ENCODE measurements at regions of chr5 and their contacts with region 1.

Region 1: DNA sequence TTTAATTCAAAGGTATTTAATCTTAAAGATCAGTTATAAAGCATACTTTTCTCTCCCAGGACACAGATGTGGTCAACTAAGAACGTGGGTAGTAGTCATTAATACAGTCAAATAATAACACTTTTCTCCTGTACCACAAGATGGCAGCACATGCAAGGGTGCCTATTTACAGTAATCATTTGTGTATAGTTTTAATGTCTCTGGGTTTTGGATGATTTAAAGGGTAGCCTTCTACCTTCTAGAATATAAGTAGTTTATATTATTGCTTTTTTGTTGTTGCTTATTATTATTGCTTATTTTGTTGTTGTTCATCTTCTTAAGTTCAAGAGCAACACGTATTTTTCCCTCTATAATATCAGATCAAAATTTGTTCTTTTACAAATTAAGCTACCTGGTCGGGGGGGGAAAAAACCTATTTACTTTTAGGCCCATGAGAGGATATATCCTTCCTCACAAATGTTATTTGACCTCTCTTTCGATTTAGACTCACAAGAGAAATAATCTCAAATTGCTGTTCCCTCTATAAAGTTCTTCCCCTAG is 59.6 kb upstream of the SLC27A6 start:
- DNase-seq: peak; percentile 34
- ATAC-seq: peak; percentile 83
- H3K4me3 ChIP-seq: no peak overlapping the region
- H3K27ac ChIP-seq: no peak overlapping the region
- H3K4me1 ChIP-seq: no peaks in the 10 kb centered on the region
- H3K27me3 ChIP-seq: no peaks in the 10 kb centered on the region
- CTCF ChIP-seq: peak; percentile 73
- EP300 ChIP-seq: no peak
- POLR2A ChIP-seq: no peak
- RAD21 ChIP-seq: peak; percentile 41; the same call in 1 of the 2 replicates

Region 2: GRCh38 chr5:129125810-129126209 is 220.2 kb after region 1 on chr5:
- CTCF ChIA-PET with region 1: interaction called, 9 read pairs
- POLR2A ChIA-PET with region 1: no interaction called
- in situ Hi-C with region 1: loop called (anchors 5 kb)
- intact Hi-C with region 1: loop called (anchors 1 kb)
- DNase-seq: no peak
- ATAC-seq: peak; percentile 56
- H3K4me3 ChIP-seq: no peak overlapping the region
- H3K27ac ChIP-seq: no peak overlapping the region
- H3K4me1 ChIP-seq: no peaks in the 10 kb centered on the region
- H3K27me3 ChIP-seq: no peaks in the 10 kb centered on the region
- CTCF ChIP-seq: no peak
- EP300 ChIP-seq: no peak
- POLR2A ChIP-seq: no peak
- RAD21 ChIP-seq: no peak

Region 3: DNA sequence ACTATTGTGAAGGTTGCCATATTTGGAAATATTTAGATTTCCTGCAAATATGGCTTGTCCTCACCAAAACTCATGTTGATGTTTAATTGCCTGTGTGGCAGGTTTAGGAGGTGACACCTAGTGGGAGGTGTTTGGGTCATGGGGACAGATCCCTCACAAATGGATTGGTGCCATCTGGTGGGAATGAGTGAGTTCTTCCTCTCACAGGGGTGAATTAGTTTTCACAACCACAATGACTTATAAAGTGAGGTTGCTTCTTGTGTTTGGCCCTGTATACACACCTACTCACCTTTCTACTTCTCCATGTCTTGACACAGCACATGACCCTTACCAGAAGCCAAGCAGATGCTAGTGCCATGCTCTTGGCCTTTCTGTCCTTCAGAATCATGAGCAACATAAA is 230.0 kb after region 1 on chr5:
- CTCF ChIA-PET with region 1: interaction called, 17 read pairs
- POLR2A ChIA-PET with region 1: no interaction called
- in situ Hi-C with region 1: no loop called
- intact Hi-C with region 1: loop called (anchors 1 kb)
- DNase-seq: peak; percentile 21
- ATAC-seq: peak; percentile 87
- H3K4me3 ChIP-seq: no peak overlapping the region
- H3K27ac ChIP-seq: no peak overlapping the region
- H3K4me1 ChIP-seq: no peaks in the 10 kb centered on the region
- H3K27me3 ChIP-seq: no peaks in the 10 kb centered on the region
- CTCF ChIP-seq: peak; percentile 53
- EP300 ChIP-seq: no peak
- POLR2A ChIP-seq: no peak
- RAD21 ChIP-seq: 0 out of 2 replicates have a peak, but pooled peaks have one; percentile 9

Measured in HepG2 (cell line).